ENCODE measurements at regions of chr3 and their contacts with region 1.

Region 1: GRCh38 chr3:27467545-27467944 is 16.6 kb downstream of the SLC4A7 start:
- DNase-seq: no peak
- H3K4me3 ChIP-seq: no peak overlapping the region
- H3K27ac ChIP-seq: no peak overlapping the region
- H3K27me3 ChIP-seq: no peaks in the 10 kb centered on the region
- CTCF ChIP-seq: peak; percentile 65

Region 2: DNA sequence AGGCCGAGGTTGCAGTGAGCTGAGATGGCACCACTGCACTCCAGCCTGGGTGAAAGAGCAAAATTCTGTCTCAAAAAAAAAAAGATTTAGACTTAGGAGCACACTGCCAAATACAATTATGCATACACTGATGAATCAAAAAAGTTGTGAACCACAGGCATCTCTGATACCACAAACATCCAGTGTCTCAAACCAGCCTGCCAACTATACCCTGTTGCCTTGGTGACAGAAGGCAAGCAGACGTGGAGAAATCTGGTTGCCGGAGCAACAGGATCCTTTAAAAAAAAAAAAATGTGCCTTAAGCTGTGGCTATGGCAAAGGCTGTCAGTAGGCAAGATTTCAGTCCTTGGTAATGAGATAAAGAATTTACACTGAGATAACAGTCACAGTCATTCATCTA is 300.7 kb before region 1 on chr3:
- CTCF ChIA-PET with region 1: interaction called, 11 read pairs
- POLR2A ChIA-PET with region 1: no interaction called
- DNase-seq: peak; percentile 68
- H3K4me3 ChIP-seq: no peak overlapping the region
- H3K27ac ChIP-seq: no peak overlapping the region
- H3K27me3 ChIP-seq: no peaks in the 10 kb centered on the region
- CTCF ChIP-seq: no peak

Region 3: DNA sequence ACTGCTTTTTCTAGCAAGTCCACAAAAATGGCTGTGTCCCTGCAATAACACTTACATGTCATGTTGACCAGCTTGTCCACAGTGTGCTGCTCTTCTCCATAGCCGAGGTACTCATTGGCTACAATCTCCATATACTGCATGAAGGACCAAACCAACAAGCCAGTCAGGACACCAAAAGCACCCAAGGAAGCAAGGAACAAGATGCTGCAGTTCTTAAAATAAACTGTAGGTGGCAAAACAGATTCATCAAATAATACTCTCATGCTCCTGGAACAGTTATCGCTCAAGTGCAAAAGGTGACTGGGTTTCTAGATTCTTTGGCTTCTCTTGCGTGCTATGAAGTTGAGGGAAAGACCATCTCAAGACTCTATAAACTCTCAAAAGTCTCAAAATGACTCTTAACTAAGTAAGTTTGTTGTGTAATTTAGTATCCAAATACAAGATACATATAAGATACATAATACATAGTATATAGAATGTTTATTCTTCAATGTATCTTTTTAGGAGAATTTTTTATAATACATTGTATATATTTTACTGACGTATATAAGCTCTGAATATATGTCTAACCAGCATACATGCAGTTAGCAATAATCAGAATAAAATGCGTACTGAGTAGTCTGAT is 155.4 kb before region 1 on chr3:
- CTCF ChIA-PET with region 1: interaction called, 12 read pairs
- POLR2A ChIA-PET with region 1: no interaction called
- DNase-seq: peak; percentile 42
- H3K4me3 ChIP-seq: no peak overlapping the region
- H3K27ac ChIP-seq: no peak overlapping the region
- H3K27me3 ChIP-seq: no peaks in the 10 kb centered on the region
- CTCF ChIP-seq: peak; percentile 78

Region 4: DNA sequence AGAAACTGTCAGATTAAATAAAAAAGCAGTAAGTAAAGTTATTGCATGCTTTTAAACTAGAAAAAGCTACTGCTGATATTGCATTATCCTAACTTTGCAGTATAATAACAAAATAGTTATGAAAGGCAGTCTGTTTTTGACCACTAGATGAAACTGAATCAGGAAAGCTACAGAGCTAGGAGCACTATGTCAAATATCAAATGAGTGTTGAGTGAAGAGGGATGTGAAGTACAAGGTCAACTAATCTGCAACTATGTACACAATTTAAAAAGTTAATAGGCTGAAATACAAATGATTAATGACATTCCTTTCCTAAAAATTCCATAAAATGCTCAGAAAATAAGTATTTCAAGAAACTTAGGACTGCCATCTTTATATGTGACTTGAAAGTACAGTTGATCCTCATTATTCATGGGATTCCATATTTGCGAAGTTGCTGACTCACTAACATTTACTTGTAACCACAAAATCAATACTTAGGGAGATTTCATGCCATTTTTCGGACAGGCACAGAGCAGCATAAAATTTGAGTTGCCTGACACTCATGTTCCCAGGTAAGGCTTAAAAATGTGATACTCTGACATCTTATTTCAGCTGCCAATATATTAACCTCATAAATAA is 17.9 kb before region 1 on chr3:
- CTCF ChIA-PET with region 1: interaction called, 32 read pairs
- POLR2A ChIA-PET with region 1: no interaction called
- DNase-seq: no peak
- H3K4me3 ChIP-seq: no peak overlapping the region
- H3K27ac ChIP-seq: no peak overlapping the region
- H3K27me3 ChIP-seq: no peaks in the 10 kb centered on the region
- CTCF ChIP-seq: no peak

Region 5: GRCh38 chr3:27483117-27484014 is 15.8 kb after region 1 on chr3:
- CTCF ChIA-PET with region 1: interaction called, 11 read pairs
- POLR2A ChIA-PET with region 1: interaction called, 5 read pairs
- DNase-seq: no peak
- H3K4me3 ChIP-seq: peak overlapping the region; percentile 88
- H3K27ac ChIP-seq: peak overlapping the region; percentile 75
- H3K27me3 ChIP-seq: no peaks in the 10 kb centered on the region
- CTCF ChIP-seq: no peak

Measured in AG04450 (cell line).